Head of caudate nucleus (tissue), 42 donors: ENCODE measurements at regions of chr19 and their contacts with region 1.

Region 1: GRCh38 chr19:45681391-45682015 is 10.2 kb downstream of the SNRPD2 start:
- DNase-seq: peak; percentile 78 to 94 (median 88)

Region 2: DNA sequence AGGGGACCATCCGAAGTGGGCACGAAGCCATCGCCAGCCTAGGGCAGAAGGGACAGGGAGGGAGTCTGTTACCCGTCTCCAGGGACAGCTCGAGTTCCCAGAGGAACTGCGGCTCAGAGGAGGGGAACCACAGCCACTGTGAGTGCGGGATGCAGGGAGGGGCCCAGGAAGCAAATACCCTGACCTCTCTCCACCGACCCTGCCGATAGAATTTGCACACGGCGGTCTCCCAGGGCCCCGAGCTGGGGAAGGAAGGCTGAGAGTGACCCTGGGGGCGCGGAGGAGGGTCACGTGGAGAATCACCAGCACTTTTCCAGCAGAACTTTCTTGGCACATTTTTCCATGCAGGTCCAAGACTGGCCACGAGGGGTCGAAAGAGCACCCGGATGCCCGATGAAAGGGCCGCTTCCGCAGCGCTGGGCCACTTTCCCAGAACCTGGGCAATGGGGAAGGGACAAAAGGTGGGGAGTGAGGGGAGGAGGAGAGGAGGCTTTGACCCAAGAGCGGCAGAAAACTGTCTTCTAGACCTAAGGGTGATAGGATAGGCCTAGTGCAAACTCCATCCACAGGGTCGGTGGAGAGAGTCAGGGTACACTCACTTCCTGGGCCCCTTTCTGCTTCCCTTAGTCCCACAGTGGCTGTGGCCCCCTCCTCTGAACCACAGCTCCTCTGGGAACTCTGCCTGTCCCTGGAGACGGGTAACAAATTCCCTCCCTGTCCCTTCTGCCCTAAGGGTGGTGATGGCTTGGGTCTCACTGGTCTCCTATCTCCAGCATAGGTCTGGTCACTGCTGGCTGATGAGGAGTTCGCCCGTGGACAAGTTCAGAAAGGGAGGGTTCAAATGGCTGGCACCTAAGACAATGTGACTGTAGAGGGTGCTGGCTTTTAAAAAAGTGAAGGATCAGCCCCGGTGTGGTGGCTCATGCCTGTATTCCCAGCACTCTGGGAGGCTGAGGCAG is 74.2 kb before region 1 on chr19:
- intact Hi-C with region 1: loop called (anchors 5 kb)
- DNase-seq: peak; percentile 35 to 86 (median 68)